ENCODE measurements at regions of chr2 and their contacts with region 1.

Region 1: DNA sequence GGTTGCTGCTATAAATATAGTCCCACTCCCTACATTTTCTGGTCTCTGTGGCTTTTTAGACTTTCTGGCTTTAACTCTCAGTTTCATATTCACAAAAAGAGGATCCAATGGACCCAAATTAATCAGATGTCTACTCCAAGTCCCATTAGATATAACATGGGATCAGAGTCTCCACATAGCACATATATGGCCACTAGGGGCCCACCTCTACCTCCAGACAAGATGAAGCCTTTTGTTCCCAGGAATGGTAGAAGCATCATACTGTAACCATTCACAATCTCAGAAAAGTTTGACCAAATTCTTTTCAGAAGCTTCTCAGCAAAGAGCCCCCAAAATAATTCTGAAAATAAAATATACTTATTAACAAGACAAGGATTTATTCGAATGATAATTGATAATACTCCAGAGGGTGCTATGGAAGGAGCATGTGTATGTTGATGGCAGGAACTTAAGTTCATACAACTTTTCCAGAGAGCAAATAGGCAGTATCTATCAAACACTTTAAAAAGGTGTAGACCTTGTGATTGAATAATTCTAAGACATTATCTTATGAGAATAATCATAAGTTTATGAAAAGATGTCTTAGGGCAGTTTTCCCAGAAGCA is 382.3 kb upstream of the CRIM1 start:
- DNase-seq: no peak
- ATAC-seq: peak; percentile 88
- H3K4me3 ChIP-seq: no peak overlapping the region
- H3K27ac ChIP-seq: no peak overlapping the region
- H3K4me1 ChIP-seq: no peaks in the 10 kb centered on the region
- H3K27me3 ChIP-seq: no peaks in the 10 kb centered on the region
- CTCF ChIP-seq: peak; percentile 61 to 64 (median 63)
- EP300 ChIP-seq: no peak
- POLR2A ChIP-seq: no peak
- RAD21 ChIP-seq: peak; percentile 71

Region 2: DNA sequence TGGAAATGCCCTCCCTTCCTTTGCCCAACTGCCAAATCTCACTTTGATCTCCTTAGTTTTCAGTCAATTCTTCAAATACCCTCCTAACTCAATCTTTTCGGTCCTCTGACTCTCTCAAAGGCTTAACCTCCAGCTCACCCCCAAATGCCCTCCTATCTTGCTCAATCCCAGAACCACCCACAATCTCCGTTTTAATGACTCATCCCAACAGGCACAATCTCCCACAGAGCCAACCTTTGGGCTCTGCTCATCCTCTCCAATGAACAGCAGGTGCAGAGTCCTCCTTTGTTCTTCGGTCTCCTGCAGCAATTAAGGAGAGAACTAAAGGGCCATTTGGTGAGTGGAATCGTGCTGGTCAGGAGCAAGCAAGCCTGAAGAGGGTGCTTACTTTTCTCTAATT is 16.3 kb after region 1 on chr2:
- CTCF ChIA-PET with region 1: interaction called, 13 read pairs
- POLR2A ChIA-PET with region 1: no interaction called
- RAD21 ChIA-PET with region 1: interaction called, 5 read pairs
- SMC1A ChIA-PET with region 1: no interaction called
- in situ Hi-C with region 1: no loop called
- intact Hi-C with region 1: no loop called
- DNase-seq: no peak
- ATAC-seq: no peak
- H3K4me3 ChIP-seq: no peak overlapping the region
- H3K27ac ChIP-seq: no peak overlapping the region
- H3K4me1 ChIP-seq: no peaks in the 10 kb centered on the region
- H3K27me3 ChIP-seq: no peaks in the 10 kb centered on the region
- CTCF ChIP-seq: no peak
- EP300 ChIP-seq: no peak
- POLR2A ChIP-seq: no peak
- RAD21 ChIP-seq: no peak

Region 3: GRCh38 chr2:36044411-36044810 is 71.2 kb after region 1 on chr2:
- CTCF ChIA-PET with region 1: no interaction called
- POLR2A ChIA-PET with region 1: no interaction called
- RAD21 ChIA-PET with region 1: no interaction called
- SMC1A ChIA-PET with region 1: no interaction called
- in situ Hi-C with region 1: no loop called
- intact Hi-C with region 1: no loop called
- DNase-seq: no peak
- ATAC-seq: no peak; the same call in 1 of the 3 replicates
- H3K4me3 ChIP-seq: no peak overlapping the region
- H3K27ac ChIP-seq: no peak overlapping the region
- H3K4me1 ChIP-seq: no peaks in the 10 kb centered on the region
- H3K27me3 ChIP-seq: no peaks in the 10 kb centered on the region
- CTCF ChIP-seq: no peak
- EP300 ChIP-seq: no peak
- POLR2A ChIP-seq: no peak
- RAD21 ChIP-seq: no peak

Region 4: DNA sequence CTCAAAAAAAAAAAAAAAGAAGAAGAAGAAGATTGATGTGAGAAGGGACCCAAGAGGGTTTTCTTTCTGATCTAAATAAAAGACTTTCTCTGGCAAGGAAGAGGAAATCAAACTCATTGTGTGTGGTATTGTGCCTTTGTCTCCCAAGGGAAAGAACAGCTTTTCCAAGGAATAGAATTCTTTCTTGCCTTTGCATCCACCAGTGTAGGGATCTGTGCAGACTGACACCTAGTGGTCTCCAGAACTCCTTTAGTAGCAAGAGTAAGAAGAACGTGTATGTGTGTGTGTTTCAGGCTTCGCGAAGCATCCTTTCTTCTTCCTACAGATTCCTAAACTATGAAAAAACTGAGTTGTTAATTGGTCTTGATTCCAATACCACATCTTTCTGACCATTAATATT is 348.9 kb after region 1 on chr2:
- CTCF ChIA-PET with region 1: interaction called, 3 read pairs
- POLR2A ChIA-PET with region 1: no interaction called
- RAD21 ChIA-PET with region 1: interaction called, 5 read pairs
- SMC1A ChIA-PET with region 1: no interaction called
- in situ Hi-C with region 1: no loop called
- intact Hi-C with region 1: loop called (anchors 10 kb)
- DNase-seq: no peak
- ATAC-seq: no peak
- H3K4me3 ChIP-seq: no peak overlapping the region
- H3K27ac ChIP-seq: no peak overlapping the region
- H3K4me1 ChIP-seq: no peaks in the 10 kb centered on the region
- H3K27me3 ChIP-seq: no peaks in the 10 kb centered on the region
- CTCF ChIP-seq: peak; percentile 24 to 34 (median 32); a peak in 4 of 6 replicates
- EP300 ChIP-seq: no peak
- POLR2A ChIP-seq: no peak
- RAD21 ChIP-seq: peak; percentile 43

Region 5: DNA sequence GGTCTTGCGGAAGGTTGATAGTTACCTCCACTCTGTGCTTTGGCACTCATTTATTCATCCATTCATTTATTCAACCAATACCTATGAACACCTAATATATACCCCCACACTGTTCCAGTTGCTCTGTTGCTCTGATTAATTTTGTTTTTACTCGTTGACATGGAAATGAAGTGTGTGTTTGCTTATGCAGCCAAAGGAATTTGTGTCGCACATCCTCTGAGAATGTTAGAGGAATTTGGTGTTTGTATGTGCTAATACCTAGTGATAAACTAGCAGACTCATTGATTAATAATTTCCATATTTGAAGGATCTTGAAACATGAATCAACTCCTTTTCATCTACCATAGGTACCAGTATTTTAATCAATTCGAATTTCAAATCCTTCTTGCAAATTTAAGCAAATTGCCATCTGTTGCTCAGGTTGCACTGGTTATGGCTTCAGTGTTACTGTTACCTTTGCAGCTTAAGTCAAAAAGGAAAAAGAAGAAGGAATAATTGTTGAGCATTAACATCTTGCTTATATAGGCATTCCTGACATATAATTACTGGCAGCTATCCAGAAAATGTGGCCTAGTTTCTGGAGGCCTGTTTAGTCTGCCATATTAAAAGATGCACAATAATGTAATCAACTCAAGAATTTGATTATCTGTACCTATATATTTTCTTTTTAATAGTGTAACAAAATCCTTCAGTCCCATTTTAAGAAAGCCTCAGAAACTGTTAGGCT is 356.7 kb after region 1 on chr2:
- CTCF ChIA-PET with region 1: interaction called, 13 read pairs
- POLR2A ChIA-PET with region 1: no interaction called
- RAD21 ChIA-PET with region 1: no interaction called
- SMC1A ChIA-PET with region 1: interaction called, 6 read pairs
- in situ Hi-C with region 1: no loop called
- intact Hi-C with region 1: loop called (anchors 10 kb)
- DNase-seq: no peak
- ATAC-seq: no peak
- H3K4me3 ChIP-seq: no peak overlapping the region
- H3K27ac ChIP-seq: no peak overlapping the region
- H3K4me1 ChIP-seq: no peaks in the 10 kb centered on the region
- H3K27me3 ChIP-seq: no peaks in the 10 kb centered on the region
- CTCF ChIP-seq: no peak
- EP300 ChIP-seq: no peak
- POLR2A ChIP-seq: no peak
- RAD21 ChIP-seq: no peak

Region 6: GRCh38 chr2:36355151-36355889 is 382.1 kb after region 1 on chr2 and contains the start of gene CRIM1:
- CTCF ChIA-PET with region 1: interaction called, 5 read pairs
- POLR2A ChIA-PET with region 1: no interaction called
- RAD21 ChIA-PET with region 1: no interaction called
- SMC1A ChIA-PET with region 1: interaction called, 3 read pairs
- in situ Hi-C with region 1: no loop called
- intact Hi-C with region 1: loop called (anchors 10 kb)
- DNase-seq: no peak
- ATAC-seq: peak; percentile 45
- H3K4me3 ChIP-seq: peak within 1 kb of the TSS; percentile 49; the same call in 1 of the 2 replicates
- H3K27ac ChIP-seq: no peak within 1 kb of the TSS
- H3K4me1 ChIP-seq: peaks cover 9% of the 10 kb centered on the region
- H3K27me3 ChIP-seq: peaks cover 1 to 7% of the 10 kb centered on the region in 2 experiments; a peak in 3 of 4 replicates
- CTCF ChIP-seq: no peak
- EP300 ChIP-seq: no peak
- POLR2A ChIP-seq: 0 out of 2 replicates have a peak, but pooled peaks have one; percentile 34
- RAD21 ChIP-seq: no peak
- polyA plus RNA-seq, gene CRIM1: 2.1 to 2.4 TPM

Region 7: GRCh38 chr2:36663851-36664695 is 690.8 kb after region 1 on chr2:
- CTCF ChIA-PET with region 1: interaction called, 14 read pairs
- POLR2A ChIA-PET with region 1: no interaction called
- RAD21 ChIA-PET with region 1: interaction called, 3 read pairs
- SMC1A ChIA-PET with region 1: interaction called, 3 read pairs
- in situ Hi-C with region 1: no loop called
- intact Hi-C with region 1: loop called (anchors 10 kb)
- DNase-seq: no peak
- ATAC-seq: peak; percentile 94
- H3K4me3 ChIP-seq: no peak overlapping the region
- H3K27ac ChIP-seq: no peak overlapping the region
- H3K4me1 ChIP-seq: no peaks in the 10 kb centered on the region
- H3K27me3 ChIP-seq: peaks cover 2 to 4% of the 10 kb centered on the region in 2 experiments; a peak in 2 of 4 replicates
- CTCF ChIP-seq: peak; percentile 58 to 75 (median 74); a peak in 5 of 6 replicates
- EP300 ChIP-seq: no peak
- POLR2A ChIP-seq: no peak
- RAD21 ChIP-seq: peak; percentile 88

Measured in GM12878 (cell line).